Mammary epithelial cell (primary cell): ENCODE measurements at regions of chr2 and their contacts with region 1.

Region 1: GRCh38 chr2:175500255-175500654 is 318.7 kb upstream of the ATP5MC3 start:
- DNase-seq: no peak
- H3K4me3 ChIP-seq: no peak overlapping the region
- H3K27ac ChIP-seq: no peak overlapping the region
- H3K4me1 ChIP-seq: no peaks in the 10 kb centered on the region
- H3K27me3 ChIP-seq: no peaks in the 10 kb centered on the region
- CTCF ChIP-seq: no peak

Region 2: DNA sequence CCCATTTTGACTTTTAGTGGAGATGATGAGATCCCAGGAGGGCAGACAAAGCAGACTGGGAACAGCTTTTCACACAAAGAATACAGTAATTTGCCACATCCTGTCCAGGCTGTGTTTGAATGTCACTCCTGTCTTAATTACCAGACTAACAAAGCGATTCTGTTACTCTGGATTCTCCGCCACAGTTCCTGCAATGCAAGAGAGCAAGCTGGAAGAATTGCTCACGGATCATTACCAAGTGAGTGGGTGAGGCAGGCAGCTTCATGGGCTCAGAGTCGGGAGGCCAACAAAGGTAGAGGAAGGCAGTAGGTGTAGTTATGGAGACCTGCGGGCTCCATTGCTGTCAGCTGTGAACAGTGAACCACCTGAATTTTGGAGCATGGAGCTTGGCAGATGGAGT is 68.2 kb before region 1 on chr2:
- CTCF ChIA-PET with region 1: no interaction called
- dilution Hi-C with region 1: no loop called
- in situ Hi-C with region 1: no loop called
- intact Hi-C with region 1: no loop called
- DNase-seq: no peak
- H3K4me3 ChIP-seq: no peak overlapping the region
- H3K27ac ChIP-seq: no peak overlapping the region
- H3K4me1 ChIP-seq: no peaks in the 10 kb centered on the region
- H3K27me3 ChIP-seq: no peaks in the 10 kb centered on the region
- CTCF ChIP-seq: no peak

Region 3: DNA sequence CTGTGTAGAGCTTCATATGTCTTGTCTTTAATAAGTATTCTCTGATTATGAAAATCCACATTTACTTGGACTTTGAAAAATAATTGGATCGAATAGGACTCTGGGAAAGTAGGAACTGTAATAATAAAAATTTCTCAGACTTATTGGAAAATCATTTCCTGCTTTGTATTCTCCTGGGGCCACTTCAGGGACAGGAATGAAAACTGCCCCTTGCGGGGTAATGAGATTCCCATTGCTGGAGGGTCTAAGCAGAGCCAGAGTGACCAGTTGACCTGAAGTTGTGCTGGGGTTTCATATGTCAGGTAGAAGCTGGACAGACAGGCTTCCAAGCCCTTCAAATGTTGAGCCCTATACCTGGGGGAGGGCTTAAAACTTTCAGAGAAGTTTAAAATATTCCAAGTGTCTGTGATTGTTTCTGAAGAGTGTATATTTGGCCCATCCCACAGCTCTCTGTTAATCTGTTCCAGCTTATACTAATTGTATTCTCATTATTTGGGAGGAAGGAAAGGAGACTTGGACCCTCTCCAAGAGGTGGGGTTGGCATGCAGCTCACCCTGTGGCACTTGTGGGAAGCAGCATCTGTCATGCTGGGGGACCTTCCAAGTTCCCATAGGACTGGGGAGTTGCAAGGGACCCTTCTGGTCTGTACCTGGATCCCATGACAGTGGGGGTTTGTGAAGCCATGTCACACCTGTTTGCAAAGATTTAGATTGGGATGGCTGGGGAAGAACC is 50.1 kb before region 1 on chr2:
- CTCF ChIA-PET with region 1: no interaction called
- dilution Hi-C with region 1: no loop called
- in situ Hi-C with region 1: no loop called
- intact Hi-C with region 1: no loop called
- DNase-seq: no peak
- H3K4me3 ChIP-seq: no peak overlapping the region
- H3K27ac ChIP-seq: no peak overlapping the region
- H3K4me1 ChIP-seq: no peaks in the 10 kb centered on the region
- H3K27me3 ChIP-seq: no peaks in the 10 kb centered on the region
- CTCF ChIP-seq: no peak

Region 4: GRCh38 chr2:175463589-175464310 is 36.5 kb before region 1 on chr2:
- CTCF ChIA-PET with region 1: no interaction called
- dilution Hi-C with region 1: loop called (anchors 5 kb)
- in situ Hi-C with region 1: no loop called
- intact Hi-C with region 1: no loop called
- DNase-seq: no peak
- H3K4me3 ChIP-seq: no peak overlapping the region
- H3K27ac ChIP-seq: no peak overlapping the region
- H3K4me1 ChIP-seq: no peaks in the 10 kb centered on the region
- H3K27me3 ChIP-seq: no peaks in the 10 kb centered on the region
- CTCF ChIP-seq: no peak

Region 5: GRCh38 chr2:175518206-175518605 is 18.0 kb after region 1 on chr2:
- CTCF ChIA-PET with region 1: no interaction called
- dilution Hi-C with region 1: no loop called
- in situ Hi-C with region 1: no loop called
- intact Hi-C with region 1: no loop called
- DNase-seq: no peak
- H3K4me3 ChIP-seq: no peak overlapping the region
- H3K27ac ChIP-seq: no peak overlapping the region
- H3K4me1 ChIP-seq: no peaks in the 10 kb centered on the region
- H3K27me3 ChIP-seq: no peaks in the 10 kb centered on the region
- CTCF ChIP-seq: no peak

Region 6: DNA sequence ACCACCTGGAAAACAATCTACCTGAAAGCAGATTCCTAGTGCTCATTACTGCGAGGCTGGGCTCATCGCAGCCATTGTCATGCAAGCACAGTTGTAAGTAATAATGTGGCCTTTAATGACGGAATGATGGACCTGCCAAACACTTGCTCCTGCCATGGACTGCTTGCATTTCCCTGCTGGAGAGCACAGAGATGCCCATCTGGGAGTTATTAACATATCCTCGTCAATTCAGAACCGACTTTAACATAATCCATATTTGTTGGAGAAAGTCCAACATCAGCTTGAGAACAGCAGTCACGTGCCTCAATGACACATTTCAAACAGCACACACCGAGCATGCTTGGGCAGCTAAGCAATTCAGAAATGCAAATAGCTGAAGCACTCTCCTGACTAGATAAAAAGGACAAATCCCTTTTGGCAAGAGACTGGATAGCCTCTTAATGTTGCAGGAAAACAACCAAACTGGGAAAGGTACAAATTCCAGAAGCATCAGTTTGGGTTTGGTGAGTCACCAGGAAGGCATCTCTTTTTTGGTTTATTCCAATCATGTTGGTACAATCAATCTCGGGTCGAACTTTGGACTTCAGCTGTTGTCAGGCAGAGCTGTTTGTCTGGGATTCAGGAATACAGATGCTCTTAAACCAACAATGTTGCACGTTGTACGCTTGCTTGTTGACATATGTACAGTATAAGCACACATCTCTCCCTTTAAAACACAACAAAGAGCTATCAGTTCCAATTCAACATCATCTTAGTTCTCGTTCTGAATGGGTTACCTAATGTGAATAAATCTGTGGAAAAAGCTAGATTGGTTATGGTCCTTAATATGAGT is 106.0 kb after region 1 on chr2:
- CTCF ChIA-PET with region 1: no interaction called
- dilution Hi-C with region 1: loop called (anchors 5 kb)
- in situ Hi-C with region 1: no loop called
- intact Hi-C with region 1: no loop called
- DNase-seq: no peak
- H3K4me3 ChIP-seq: no peak overlapping the region
- H3K27ac ChIP-seq: no peak overlapping the region
- H3K4me1 ChIP-seq: no peaks in the 10 kb centered on the region
- H3K27me3 ChIP-seq: no peaks in the 10 kb centered on the region
- CTCF ChIP-seq: no peak